A673 (cell line): ENCODE measurements at regions of chr14 and their contacts with region 1.

Region 1: DNA sequence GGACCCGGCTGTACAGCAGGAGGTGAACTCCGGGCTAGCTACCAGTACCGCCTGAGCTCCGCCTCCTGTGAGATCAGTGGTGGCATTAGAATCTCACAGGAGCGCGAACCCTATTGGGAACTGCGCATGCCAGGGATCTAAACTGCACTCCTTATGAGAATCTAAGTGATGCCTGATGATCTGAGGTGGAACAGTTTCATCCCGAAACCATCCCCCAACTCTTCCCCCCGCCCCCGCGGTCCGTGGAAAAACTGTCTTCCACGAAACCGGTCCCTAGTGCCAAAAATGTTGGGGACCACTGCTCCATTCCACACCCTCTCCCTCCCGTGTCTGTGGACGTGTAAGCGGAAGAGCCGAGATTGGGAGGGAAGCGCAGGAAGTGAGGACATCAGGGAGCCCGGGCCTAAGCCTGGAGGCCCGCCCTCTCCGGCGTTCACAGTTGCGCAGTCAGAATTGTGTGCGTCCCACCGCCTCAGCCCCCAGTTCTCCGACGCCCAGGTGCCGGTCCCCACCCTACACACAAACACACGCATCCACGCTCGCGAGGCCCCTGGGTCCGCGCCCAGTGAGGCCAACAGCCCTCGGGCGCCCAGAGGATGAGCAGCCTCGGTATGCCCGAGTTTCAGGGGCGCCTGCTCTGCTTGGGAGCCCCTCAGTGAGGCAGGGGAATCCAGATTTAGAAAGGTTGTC is 1.8 kb upstream of the RNASE4 start:
- DNase-seq: peak; percentile 95
- H3K4me3 ChIP-seq: peak overlapping the region; percentile 79
- H3K27ac ChIP-seq: peak overlapping the region; percentile 96
- H3K4me1 ChIP-seq: peaks cover 16% of the 10 kb centered on the region
- H3K27me3 ChIP-seq: no peaks in the 10 kb centered on the region
- CTCF ChIP-seq: no peak

Region 2: DNA sequence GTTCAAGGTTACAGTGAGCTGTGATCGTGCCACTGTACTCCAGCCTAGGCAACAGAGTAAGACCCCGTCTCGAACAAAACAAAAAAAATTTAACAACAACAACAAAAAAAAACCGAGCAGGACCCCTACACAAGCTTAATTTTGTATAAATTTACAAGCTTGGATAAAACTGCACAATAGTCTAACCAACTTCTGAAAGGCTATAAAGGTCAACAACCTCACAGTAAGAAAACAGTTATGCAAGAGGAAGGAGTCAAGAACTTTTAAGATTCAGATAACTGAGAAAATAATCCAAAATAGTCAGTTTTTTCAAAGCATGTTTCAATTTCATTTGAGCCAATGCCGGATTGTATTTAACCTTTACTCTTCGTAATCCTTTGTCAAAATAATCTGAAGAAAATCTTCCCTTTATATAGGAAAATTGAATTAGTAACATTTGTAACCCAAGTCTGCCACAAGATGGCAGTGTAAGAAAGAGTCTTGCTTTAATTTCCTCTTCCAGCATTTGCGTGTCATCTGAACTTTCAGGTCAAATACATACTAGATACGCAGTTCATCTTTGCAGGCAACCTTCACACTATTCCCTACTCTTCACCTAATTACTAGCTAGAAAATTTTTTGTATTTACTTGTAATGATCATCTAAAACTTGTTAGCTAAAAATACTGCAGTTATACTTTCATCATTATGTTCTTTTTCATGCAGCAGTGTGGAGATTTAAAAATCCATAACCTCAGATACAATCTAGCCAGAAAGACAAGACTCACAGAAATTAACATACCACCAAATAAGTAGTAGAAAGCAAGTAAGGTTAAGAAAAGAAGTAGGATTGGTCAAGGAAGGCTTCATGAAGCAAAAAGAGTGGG is 355.3 kb before region 1 on chr14:
- CTCF ChIA-PET with region 1: no interaction called
- POLR2A ChIA-PET with region 1: no interaction called
- intact Hi-C with region 1: loop called (anchors 5 kb)
- DNase-seq: peak; percentile 76
- H3K4me3 ChIP-seq: peak overlapping the region; percentile 2
- H3K27ac ChIP-seq: peak overlapping the region; percentile 60
- H3K4me1 ChIP-seq: peaks cover 23% of the 10 kb centered on the region
- H3K27me3 ChIP-seq: no peaks in the 10 kb centered on the region
- CTCF ChIP-seq: peak; percentile 74

Region 3: GRCh38 chr14:20413045-20413799 is 269.4 kb before region 1 on chr14 and contains the start of gene TEP1:
- CTCF ChIA-PET with region 1: no interaction called
- POLR2A ChIA-PET with region 1: no interaction called
- intact Hi-C with region 1: loop called (anchors 5 kb)
- DNase-seq: peak; percentile 89
- H3K4me3 ChIP-seq: peak within 1 kb of the TSS; percentile 78
- H3K27ac ChIP-seq: peak within 1 kb of the TSS; percentile 85
- H3K4me1 ChIP-seq: peaks cover 13% of the 10 kb centered on the region
- H3K27me3 ChIP-seq: no peaks in the 10 kb centered on the region
- CTCF ChIP-seq: no peak
- total RNA-seq, gene TEP1: 12.3 and 15.9 TPM in 2 replicates

Region 4: DNA sequence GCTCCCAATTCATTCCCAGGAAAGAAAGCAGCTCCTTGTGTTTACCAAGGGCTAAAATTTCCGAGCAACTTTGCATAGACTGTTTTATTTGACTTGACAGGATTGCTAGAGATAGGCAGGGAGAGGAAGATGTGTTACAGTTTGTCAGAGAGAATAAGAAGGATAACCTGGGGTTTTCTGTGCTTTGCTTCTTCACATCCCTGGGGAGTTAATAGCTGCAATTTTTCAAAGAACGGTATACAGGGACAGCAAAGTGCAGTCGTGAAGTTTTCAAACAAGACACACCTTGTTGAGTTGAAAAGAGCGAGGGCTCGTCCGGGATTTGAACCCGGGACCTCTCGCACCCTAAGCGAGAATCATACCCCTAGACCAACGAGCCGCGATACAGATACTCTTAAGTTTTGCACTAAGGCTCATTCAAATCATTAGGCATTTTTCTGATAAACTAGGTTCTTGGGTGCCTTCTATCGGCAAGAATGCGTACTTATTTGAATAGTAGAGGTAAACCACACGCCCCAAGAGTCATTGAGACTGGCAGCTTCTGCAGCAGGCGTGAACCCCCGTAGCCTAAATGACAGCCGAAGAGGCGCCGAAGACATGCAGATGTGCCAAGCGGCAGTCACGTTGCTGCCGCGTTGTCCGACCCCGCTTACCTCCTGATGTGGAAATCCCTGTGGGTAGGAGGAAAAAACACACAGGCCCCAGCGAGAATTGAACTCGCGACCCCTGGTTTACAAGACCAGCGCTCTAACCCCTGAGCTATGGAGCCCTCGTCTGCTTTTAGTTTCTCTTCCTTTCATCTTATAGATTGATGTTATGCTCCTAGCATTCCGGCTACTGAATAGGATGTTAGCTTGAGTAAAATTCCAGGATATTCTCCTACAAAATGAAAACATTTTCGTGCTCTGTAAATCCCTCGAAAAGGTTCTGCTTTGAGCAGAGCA is 69.2 kb before region 1 on chr14:
- CTCF ChIA-PET with region 1: interaction called, 5 read pairs
- POLR2A ChIA-PET with region 1: no interaction called
- intact Hi-C with region 1: loop called (anchors 1 kb)
- DNase-seq: peak; percentile 99
- H3K4me3 ChIP-seq: peak overlapping the region; percentile 52
- H3K27ac ChIP-seq: peak overlapping the region; percentile 45
- H3K4me1 ChIP-seq: peaks cover 14% of the 10 kb centered on the region
- H3K27me3 ChIP-seq: no peaks in the 10 kb centered on the region
- CTCF ChIP-seq: peak; percentile 77

Region 5: GRCh38 chr14:20662968-20663732 is 19.4 kb before region 1 on chr14:
- CTCF ChIA-PET with region 1: no interaction called
- POLR2A ChIA-PET with region 1: no interaction called
- intact Hi-C with region 1: loop called (anchors 1 kb)
- DNase-seq: peak; percentile 86
- H3K4me3 ChIP-seq: peak overlapping the region; percentile 46
- H3K27ac ChIP-seq: no peak overlapping the region
- H3K4me1 ChIP-seq: no peaks in the 10 kb centered on the region
- H3K27me3 ChIP-seq: peaks cover 18% of the 10 kb centered on the region
- CTCF ChIP-seq: peak; percentile 47

Region 6: DNA sequence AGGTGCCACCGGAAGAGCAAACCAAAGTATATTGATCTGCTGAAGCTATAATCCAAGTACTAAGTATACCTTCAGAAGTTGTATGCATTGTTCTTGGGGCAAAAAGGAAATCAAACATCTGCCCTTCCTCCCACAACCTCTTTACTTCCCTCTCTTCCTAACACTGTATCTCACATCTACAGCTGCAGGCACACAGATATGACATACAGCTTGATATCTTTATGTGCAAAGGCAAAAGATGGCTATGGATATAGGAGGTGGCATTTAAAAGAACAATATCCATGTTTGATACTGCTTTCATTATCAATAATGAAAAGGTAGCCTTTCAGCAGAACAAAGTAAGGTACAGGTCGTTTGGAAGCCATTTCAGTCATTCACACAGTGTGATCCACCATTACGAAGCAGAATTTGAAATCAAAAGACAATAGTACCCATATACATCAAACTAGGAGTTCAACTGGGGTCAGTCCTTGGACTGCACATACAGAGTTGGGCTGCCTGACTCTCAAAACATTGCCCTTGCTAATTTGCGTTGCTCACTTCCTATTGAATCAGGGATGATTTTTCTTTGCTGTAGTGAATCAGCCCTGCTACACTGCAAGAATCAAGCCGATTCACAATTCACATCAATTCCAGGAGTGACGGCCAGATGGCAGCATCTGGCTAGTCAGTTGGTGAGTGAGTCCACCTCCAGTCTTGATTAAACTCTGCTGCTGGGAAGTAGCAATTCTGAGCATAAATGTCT is 14.9 kb after region 1 on chr14:
- CTCF ChIA-PET with region 1: no interaction called
- POLR2A ChIA-PET with region 1: no interaction called
- intact Hi-C with region 1: no loop called
- DNase-seq: peak; percentile 77
- H3K4me3 ChIP-seq: no peak overlapping the region
- H3K27ac ChIP-seq: no peak overlapping the region
- H3K4me1 ChIP-seq: no peaks in the 10 kb centered on the region
- H3K27me3 ChIP-seq: no peaks in the 10 kb centered on the region
- CTCF ChIP-seq: peak; percentile 77